PC-3 (cell line): ENCODE measurements at regions of chr4 and their contacts with region 1.

Region 1: DNA sequence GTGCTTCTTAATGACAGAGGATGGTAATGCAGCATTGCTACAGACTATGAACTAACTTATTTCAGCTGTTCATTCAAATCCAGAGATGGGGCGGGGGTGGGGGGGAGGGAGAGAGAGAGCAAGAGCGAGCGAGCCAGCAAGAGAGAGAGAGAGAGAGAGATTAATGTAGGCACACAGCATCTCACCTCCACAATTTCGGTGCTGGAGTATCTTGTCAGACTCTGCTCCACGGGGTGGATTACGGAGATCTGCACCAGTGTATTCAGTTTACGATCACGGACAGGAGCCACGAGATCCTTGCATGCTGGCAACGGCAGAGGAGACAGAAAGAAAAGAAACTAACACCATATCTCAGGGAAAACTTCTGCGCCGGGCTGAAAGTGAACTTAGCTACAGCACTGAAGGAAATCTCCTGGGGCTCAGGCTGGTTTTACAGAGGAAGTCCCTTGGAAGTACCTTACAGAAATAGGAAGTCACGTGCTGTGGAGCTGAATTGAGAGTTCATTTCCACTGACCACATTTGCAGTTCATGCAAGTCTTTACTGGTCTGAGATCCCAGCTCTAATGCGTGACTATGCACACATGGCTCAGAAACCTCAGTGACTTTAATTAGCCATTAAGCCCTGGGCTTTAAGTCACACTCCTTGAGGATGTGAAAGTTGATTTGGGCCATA is 440.9 kb downstream of the INPP4B start:
- DNase-seq: peak; percentile 69
- ATAC-seq: peak; percentile 16
- H3K4me3 ChIP-seq: peak overlapping the region; percentile 64
- H3K27ac ChIP-seq: peak overlapping the region; percentile 97
- H3K4me1 ChIP-seq: peaks cover 56% of the 10 kb centered on the region
- H3K27me3 ChIP-seq: no peaks in the 10 kb centered on the region
- CTCF ChIP-seq: no peak

Region 2: GRCh38 chr4:141739636-141740035 is 665.5 kb before region 1 on chr4:
- CTCF ChIA-PET with region 1: no interaction called
- POLR2A ChIA-PET with region 1: no interaction called
- intact Hi-C with region 1: no loop called
- DNase-seq: no peak
- ATAC-seq: no peak
- H3K4me3 ChIP-seq: no peak overlapping the region
- H3K27ac ChIP-seq: no peak overlapping the region
- H3K4me1 ChIP-seq: no peaks in the 10 kb centered on the region
- H3K27me3 ChIP-seq: no peaks in the 10 kb centered on the region
- CTCF ChIP-seq: no peak

Region 3: DNA sequence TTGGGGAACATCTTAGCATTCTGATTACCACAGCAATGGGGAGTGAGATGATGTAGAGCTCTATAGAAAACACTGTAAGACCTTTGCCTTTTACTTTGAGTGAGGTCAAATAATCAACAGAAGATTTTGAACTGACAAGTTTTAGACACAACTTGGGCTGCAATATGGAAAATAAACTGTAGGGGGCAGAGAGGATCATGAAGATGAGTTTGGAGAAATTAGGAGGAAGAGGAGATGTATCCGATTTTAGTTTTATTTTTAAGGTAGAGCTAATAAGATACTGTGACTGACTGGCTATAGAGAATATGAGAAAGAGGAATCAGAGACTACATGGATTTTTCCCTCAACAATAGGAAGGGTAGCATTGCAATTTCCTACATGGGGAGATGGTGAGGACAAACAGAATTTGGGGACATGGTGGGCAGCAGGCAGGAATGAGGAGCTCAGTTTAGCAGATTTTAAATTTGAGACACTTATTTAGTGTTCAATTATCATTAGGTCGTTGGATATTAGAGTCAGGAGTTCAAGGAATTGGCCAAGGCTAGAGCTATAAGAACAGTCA is 122.2 kb before region 1 on chr4:
- CTCF ChIA-PET with region 1: no interaction called
- POLR2A ChIA-PET with region 1: no interaction called
- intact Hi-C with region 1: loop called (anchors 10 kb)
- DNase-seq: peak; percentile 53
- ATAC-seq: no peak
- H3K4me3 ChIP-seq: no peak overlapping the region
- H3K27ac ChIP-seq: no peak overlapping the region
- H3K4me1 ChIP-seq: peaks cover 13% of the 10 kb centered on the region
- H3K27me3 ChIP-seq: no peaks in the 10 kb centered on the region
- CTCF ChIP-seq: peak; percentile 78

Region 4: GRCh38 chr4:142297313-142297712 is 107.8 kb before region 1 on chr4:
- CTCF ChIA-PET with region 1: no interaction called
- POLR2A ChIA-PET with region 1: no interaction called
- intact Hi-C with region 1: no loop called
- DNase-seq: no peak
- ATAC-seq: no peak
- H3K4me3 ChIP-seq: no peak overlapping the region
- H3K27ac ChIP-seq: no peak overlapping the region
- H3K4me1 ChIP-seq: no peaks in the 10 kb centered on the region; the same call in 1 of the 2 replicates
- H3K27me3 ChIP-seq: no peaks in the 10 kb centered on the region
- CTCF ChIP-seq: no peak

Region 5: DNA sequence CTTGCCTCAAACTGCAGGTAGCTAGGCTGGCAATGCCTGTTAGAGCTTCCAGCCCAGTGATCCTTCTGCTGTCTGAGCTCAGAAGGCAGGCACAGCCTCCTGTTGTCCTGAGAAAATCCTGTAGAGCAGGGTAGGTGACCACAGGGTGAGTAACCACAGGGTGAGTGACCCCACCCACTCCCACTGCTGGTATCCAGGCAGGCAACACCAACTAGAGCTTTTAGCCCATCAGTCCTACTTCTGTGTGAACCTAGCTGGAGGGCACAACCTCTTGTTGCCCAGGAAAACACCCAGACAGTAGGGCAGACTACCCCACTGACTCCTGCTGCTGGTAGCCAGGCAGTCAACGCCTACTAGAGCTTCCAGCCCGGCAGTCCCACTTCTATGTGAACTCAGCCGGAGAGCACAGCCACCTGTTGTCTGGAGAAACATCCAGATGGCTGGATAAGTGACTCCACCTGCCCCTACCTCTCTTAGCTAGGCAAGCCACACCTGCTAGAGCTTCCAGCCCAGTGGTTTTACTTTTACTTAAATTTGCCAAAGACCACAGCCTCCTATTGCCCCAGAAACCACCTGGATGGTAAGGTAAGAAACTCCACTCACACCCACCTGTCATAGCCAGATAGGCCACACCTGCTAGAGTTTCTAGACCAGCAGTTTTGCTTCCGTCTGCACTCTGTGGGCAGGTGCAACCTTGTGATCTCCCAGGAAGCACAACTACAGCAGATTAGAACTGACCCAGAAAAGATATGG is 69.4 kb after region 1 on chr4:
- CTCF ChIA-PET with region 1: no interaction called
- POLR2A ChIA-PET with region 1: interaction called, 9 read pairs
- intact Hi-C with region 1: loop called (anchors 1 kb)
- DNase-seq: peak; percentile 98
- ATAC-seq: peak; percentile 86
- H3K4me3 ChIP-seq: peak overlapping the region; percentile 63
- H3K27ac ChIP-seq: peak overlapping the region; percentile 99
- H3K4me1 ChIP-seq: peaks cover 50% of the 10 kb centered on the region
- H3K27me3 ChIP-seq: no peaks in the 10 kb centered on the region
- CTCF ChIP-seq: no peak

Region 6: DNA sequence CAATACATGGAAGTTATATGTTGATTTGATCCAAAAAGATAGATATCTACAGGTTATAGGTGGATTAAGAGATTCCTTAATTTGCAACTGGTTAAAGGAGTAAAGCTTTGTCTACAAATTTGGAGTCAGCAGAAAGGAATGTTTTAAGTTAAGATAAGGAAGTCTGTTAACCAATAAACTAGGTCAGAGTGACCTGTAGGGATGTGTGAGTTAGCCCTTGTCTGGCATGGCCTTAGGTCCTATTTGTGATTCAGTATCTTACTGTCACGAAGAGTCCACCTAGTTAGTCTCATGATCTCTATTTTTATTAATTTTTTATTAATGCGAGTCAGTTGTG is 210.1 kb after region 1 on chr4:
- CTCF ChIA-PET with region 1: no interaction called
- POLR2A ChIA-PET with region 1: no interaction called
- intact Hi-C with region 1: loop called (anchors 2 kb)
- DNase-seq: peak; percentile 97
- ATAC-seq: peak; percentile 90
- H3K4me3 ChIP-seq: peak overlapping the region; percentile 50
- H3K27ac ChIP-seq: peak overlapping the region; percentile 98
- H3K4me1 ChIP-seq: peaks cover 44% of the 10 kb centered on the region
- H3K27me3 ChIP-seq: no peaks in the 10 kb centered on the region
- CTCF ChIP-seq: no peak